IMR-90 (cell line): ENCODE measurements at regions of chr1 and their contacts with region 1.

Region 1: GRCh38 chr1:221741711-221742554 is at the start of gene DUSP10:
- DNase-seq: peak; percentile 100
- ATAC-seq: peak; percentile 93
- H3K4me3 ChIP-seq: peak within 1 kb of the TSS; percentile 74
- H3K27ac ChIP-seq: peak within 1 kb of the TSS; percentile 92
- H3K4me1 ChIP-seq: peaks cover 14% of the 10 kb centered on the region
- H3K27me3 ChIP-seq: no peaks in the 10 kb centered on the region
- CTCF ChIP-seq: 0 out of 2 replicates have a peak, but pooled peaks have one; percentile 8
- POLR2A ChIP-seq: peak; percentile 94
- RAD21 ChIP-seq: peak; percentile 49
- total RNA-seq, gene DUSP10: 59.1 and 71.4 TPM in 2 replicates

Region 2: DNA sequence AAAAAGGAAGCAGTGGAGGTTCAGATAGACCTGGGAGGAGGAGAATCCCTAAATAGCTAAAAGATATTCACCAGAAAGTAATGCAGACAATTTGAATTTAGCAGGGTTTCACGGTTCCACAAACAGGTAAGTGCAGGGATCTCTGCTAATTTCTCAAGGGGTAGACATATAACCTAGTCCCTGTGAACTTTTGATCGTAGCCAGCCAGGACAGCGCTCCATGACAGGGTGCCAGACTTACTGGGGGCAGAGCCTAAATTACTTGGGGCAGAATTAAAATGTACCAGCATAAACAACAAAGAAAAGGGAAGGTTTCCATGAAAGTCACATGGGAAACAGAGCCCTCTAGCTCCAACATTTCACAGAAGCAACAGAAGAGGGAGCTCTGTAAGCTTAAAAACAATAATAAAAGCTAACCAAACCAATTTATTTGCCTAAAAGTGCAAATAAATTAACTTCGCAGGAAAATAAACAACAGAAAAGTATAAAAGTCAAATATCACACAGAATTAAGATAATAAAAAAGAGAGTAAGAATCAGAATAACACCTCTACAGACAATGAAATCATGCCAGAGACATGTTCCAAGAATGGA is 198.3 kb before region 1 on chr1:
- CTCF ChIA-PET with region 1: interaction called, 4 read pairs
- POLR2A ChIA-PET with region 1: no interaction called
- dilution Hi-C with region 1: no loop called
- in situ Hi-C with region 1: no loop called
- intact Hi-C with region 1: loop called (anchors 1 kb)
- DNase-seq: peak; percentile 54
- ATAC-seq: peak; percentile 60
- H3K4me3 ChIP-seq: no peak overlapping the region
- H3K27ac ChIP-seq: no peak overlapping the region
- H3K4me1 ChIP-seq: no peaks in the 10 kb centered on the region
- H3K27me3 ChIP-seq: no peaks in the 10 kb centered on the region
- CTCF ChIP-seq: peak; percentile 65
- POLR2A ChIP-seq: no peak
- RAD21 ChIP-seq: peak; percentile 64

Region 3: DNA sequence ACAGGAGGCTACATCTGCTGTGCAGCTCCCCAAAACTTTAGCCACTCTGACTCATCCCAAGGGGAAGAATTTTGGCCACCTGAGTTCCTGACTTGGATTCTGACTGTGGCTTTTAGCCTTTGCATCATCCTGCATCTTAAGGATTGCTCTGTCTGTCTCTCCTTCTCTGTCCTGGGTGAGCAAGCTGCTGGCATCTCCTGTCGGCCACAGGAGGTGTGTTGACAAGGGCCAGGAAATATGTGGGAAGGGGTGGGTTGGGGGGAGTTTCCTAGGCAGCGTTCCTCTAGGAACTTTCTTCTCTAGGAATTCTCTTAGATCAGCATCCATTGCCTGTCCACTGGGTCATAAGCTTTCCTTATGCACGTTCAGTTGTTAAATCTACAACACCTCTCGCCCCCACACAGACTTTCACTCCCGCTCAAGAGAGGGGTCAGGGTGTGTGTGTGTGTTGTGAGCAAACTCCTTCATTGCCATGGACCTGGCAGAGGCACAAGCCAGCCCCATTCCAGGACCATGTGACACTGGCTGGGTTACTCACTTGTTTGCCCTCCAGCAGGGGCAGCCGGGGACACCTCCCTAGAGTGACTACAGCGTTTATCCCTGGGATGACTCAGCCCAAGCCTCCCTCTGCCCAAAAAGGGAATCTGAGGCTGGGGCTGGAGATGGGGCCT is 144.9 kb after region 1 on chr1:
- CTCF ChIA-PET with region 1: interaction called, 3 read pairs
- POLR2A ChIA-PET with region 1: no interaction called
- dilution Hi-C with region 1: no loop called
- in situ Hi-C with region 1: no loop called
- intact Hi-C with region 1: loop called (anchors 5 kb)
- DNase-seq: peak; percentile 88
- ATAC-seq: peak; percentile 97
- H3K4me3 ChIP-seq: no peak overlapping the region
- H3K27ac ChIP-seq: peak overlapping the region; percentile 2; the same call in 1 of the 2 replicates
- H3K4me1 ChIP-seq: peaks cover 8% of the 10 kb centered on the region
- H3K27me3 ChIP-seq: no peaks in the 10 kb centered on the region
- CTCF ChIP-seq: peak; percentile 12; the same call in 1 of the 2 replicates
- POLR2A ChIP-seq: no peak
- RAD21 ChIP-seq: peak; percentile 27

Region 4: DNA sequence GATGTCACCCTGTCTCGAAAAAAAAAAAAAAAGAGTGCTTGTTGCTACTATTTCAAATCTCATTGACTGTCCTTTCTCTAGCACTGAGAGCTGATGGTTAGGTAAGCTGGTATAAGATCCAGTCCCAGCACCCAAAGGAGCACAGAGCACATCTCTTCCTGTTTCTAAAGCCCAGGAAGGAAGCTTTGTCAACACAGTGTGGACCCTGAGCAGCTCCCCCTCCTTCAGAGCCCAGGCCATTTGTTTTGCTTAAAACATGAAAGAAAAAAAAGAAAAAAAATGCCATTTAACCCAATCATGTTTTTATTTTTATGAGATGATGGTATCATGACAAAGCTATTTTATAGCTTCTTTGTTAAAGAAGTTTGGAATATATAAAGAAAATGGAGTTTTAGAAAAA is 184.0 kb after region 1 on chr1:
- CTCF ChIA-PET with region 1: no interaction called
- POLR2A ChIA-PET with region 1: no interaction called
- dilution Hi-C with region 1: no loop called
- in situ Hi-C with region 1: no loop called
- intact Hi-C with region 1: no loop called
- DNase-seq: peak; percentile 4
- ATAC-seq: no peak
- H3K4me3 ChIP-seq: no peak overlapping the region
- H3K27ac ChIP-seq: no peak overlapping the region
- H3K4me1 ChIP-seq: no peaks in the 10 kb centered on the region
- H3K27me3 ChIP-seq: no peaks in the 10 kb centered on the region
- CTCF ChIP-seq: no peak
- POLR2A ChIP-seq: no peak
- RAD21 ChIP-seq: no peak

Region 5: GRCh38 chr1:221979461-221980032 is 237.6 kb after region 1 on chr1:
- CTCF ChIA-PET with region 1: no interaction called
- POLR2A ChIA-PET with region 1: no interaction called
- dilution Hi-C with region 1: no loop called
- in situ Hi-C with region 1: no loop called
- intact Hi-C with region 1: no loop called
- DNase-seq: no peak
- ATAC-seq: no peak
- H3K4me3 ChIP-seq: no peak overlapping the region
- H3K27ac ChIP-seq: no peak overlapping the region
- H3K4me1 ChIP-seq: no peaks in the 10 kb centered on the region; the same call in 1 of the 2 replicates
- H3K27me3 ChIP-seq: no peaks in the 10 kb centered on the region
- CTCF ChIP-seq: peak; percentile 17; the same call in 1 of the 2 replicates
- POLR2A ChIP-seq: no peak
- RAD21 ChIP-seq: no peak

Region 6: DNA sequence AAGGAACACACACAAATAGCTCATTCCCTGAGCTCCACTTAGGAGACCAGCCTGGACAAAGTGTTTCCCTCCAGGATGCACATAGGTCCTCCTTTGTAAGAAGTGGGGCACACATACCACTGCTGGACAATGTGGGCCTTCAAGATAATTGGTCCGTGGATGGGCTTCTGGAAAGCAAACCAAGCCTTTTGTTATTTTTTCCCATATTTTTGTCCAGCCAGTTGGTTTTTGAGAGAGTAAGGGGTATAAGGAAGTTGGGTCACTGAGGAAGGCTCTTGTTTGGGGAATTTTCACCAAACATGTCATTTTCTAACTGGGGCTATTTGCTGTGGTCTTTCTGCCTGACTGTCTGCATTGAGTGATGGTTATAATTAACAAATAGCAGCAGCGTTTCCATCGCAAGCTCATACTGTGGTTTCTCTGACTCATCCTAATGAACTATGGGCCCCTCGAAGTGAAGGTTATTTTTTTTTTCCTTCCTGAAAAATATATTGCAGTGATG is 306.2 kb after region 1 on chr1:
- CTCF ChIA-PET with region 1: no interaction called
- POLR2A ChIA-PET with region 1: no interaction called
- dilution Hi-C with region 1: no loop called
- in situ Hi-C with region 1: no loop called
- intact Hi-C with region 1: loop called (anchors 1 kb)
- DNase-seq: peak; percentile 74
- ATAC-seq: peak; percentile 59
- H3K4me3 ChIP-seq: no peak overlapping the region
- H3K27ac ChIP-seq: no peak overlapping the region
- H3K4me1 ChIP-seq: peaks cover 20% of the 10 kb centered on the region
- H3K27me3 ChIP-seq: no peaks in the 10 kb centered on the region; the same call in 1 of the 2 replicates
- CTCF ChIP-seq: no peak
- POLR2A ChIP-seq: no peak
- RAD21 ChIP-seq: no peak

Region 7: DNA sequence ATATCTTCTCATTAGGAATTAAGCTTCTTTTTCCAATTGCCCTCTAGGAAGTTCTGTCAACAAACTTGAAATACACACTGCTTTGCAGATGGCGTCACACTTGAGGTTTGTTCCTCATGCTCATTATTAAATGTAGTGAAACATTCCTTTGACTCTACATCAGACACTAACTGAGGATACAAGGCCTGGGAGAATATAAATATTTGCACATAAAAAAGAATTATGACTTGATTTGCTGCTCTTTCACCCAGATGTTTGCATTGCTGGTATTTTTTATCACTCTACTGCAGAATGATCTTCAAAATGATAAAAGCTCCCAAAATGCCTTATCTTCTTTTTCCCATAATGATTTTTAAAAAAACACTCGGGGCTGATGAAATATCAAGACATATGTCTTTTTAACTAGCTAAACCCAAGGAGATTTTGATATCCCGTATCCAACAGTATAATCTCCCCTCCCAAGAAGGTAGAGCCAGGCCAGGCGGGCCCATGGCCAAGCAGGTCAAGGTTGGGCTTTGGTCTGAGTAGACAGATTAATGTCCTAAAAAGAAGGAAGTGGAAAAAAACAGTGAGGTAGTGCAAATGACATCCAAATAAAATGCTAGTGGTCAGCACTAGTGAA is 541.3 kb after region 1 on chr1:
- CTCF ChIA-PET with region 1: no interaction called
- POLR2A ChIA-PET with region 1: no interaction called
- dilution Hi-C with region 1: no loop called
- in situ Hi-C with region 1: no loop called
- intact Hi-C with region 1: loop called (anchors 1 kb)
- DNase-seq: peak; percentile 99
- ATAC-seq: peak; percentile 91
- H3K4me3 ChIP-seq: no peak overlapping the region
- H3K27ac ChIP-seq: peak overlapping the region; percentile 94
- H3K4me1 ChIP-seq: peaks cover 19% of the 10 kb centered on the region
- H3K27me3 ChIP-seq: no peaks in the 10 kb centered on the region
- CTCF ChIP-seq: 0 out of 2 replicates have a peak, but pooled peaks have one; percentile 0
- POLR2A ChIP-seq: no peak
- RAD21 ChIP-seq: no peak

Region 8: GRCh38 chr1:222643938-222644635 is 902.2 kb after region 1 on chr1:
- CTCF ChIA-PET with region 1: no interaction called
- POLR2A ChIA-PET with region 1: no interaction called
- dilution Hi-C with region 1: no loop called
- in situ Hi-C with region 1: loop called (anchors 25 kb)
- intact Hi-C with region 1: no loop called
- DNase-seq: peak; percentile 99
- ATAC-seq: peak; percentile 100
- H3K4me3 ChIP-seq: peak overlapping the region; percentile 80
- H3K27ac ChIP-seq: peak overlapping the region; percentile 83
- H3K4me1 ChIP-seq: 0 out of 2 replicates have a peak, but pooled peaks cover 1% of the 10 kb centered on the region
- H3K27me3 ChIP-seq: no peaks in the 10 kb centered on the region
- CTCF ChIP-seq: no peak
- POLR2A ChIP-seq: peak; percentile 95
- RAD21 ChIP-seq: no peak